ENCODE measurements at regions of chr4 and their contacts with region 1.

Region 1: DNA sequence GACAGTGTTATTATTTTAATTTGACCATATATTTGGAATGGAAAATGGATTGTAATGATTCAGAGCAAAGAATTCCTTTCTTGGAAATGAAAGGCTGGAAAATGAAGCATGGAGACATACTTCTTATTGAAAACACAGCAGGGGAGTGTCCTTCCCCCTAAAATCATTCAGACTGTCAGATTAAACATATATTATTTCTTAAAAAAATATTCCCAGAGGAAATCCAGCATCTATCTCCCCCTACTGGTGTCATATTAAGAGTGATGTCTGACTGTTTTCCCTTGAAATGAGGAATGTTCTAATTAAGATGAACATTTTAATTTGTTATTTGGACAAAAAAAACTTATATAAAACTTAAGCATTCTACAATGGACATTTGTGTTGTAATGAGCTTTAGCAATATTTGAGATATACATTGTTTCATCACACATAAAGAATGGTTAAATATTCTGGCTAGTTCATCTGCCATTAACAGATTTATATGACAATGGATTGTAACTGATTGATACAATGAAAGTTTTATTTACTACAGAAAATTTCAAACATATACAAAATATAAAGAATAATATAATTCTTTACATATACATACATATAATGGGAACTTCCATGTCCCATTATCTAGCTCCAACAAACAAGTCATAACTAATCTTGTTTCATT is 264.6 kb downstream of the SPRY1 start:
- DNase-seq: no peak
- ATAC-seq: no peak

Region 2: GRCh38 chr4:123102897-123103471 is 558.2 kb before region 1 on chr4:
- intact Hi-C with region 1: loop called (anchors 5 kb)
- DNase-seq: no peak
- ATAC-seq: peak; percentile 57

Region 3: DNA sequence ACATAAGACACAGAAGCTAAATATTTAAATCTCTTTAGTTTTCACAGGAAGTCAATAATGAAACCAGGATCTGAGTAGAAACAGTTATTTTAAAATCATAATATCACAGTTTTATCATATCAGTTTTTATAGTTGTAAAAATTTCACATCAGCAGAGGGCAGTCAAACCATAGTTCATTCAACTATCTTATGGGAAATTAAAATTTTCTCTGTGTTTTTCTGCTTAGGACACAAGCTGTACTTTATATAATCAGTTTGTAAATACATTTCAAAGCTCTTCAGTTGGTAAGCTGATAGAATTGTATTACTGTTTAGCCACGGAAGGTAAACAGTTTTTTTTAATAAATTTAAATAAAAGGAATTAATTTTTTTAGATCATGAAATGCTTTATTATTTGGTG is 534.0 kb before region 1 on chr4:
- intact Hi-C with region 1: loop called (anchors 5 kb)
- DNase-seq: no peak
- ATAC-seq: no peak

Region 4: GRCh38 chr4:123418351-123418931 is 242.8 kb before region 1 on chr4:
- intact Hi-C with region 1: no loop called
- DNase-seq: no peak
- ATAC-seq: peak; percentile 68

Region 5: GRCh38 chr4:123564758-123565346 is 96.4 kb before region 1 on chr4:
- intact Hi-C with region 1: loop called (anchors 5 kb)
- DNase-seq: no peak
- ATAC-seq: peak; percentile 91